Left lung (tissue), 14 donors: ENCODE measurements at regions of chr12 and their contacts with region 1.

Region 1: DNA sequence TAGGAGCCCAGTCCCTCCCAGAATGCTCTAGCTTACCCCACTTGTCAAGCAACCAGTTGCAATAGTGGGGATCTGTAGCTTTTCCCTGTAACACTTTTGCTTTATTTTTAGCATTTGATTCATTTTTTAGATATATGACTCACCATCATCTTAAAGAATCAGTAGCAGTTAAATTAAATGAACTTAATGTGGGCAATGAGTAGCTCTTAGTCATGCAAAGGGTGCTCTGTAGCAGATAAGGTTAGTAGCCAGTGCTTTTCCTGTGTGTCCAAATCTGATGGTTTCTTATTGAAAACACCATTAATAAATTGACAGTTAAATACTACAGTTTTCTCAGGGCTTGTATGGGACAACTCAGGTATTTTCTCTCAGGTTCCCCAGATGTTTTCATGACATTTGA is 311.8 kb downstream of the RERGL start:
- DNase-seq: no peak
- ATAC-seq: no peak
- H3K4me3 ChIP-seq: no peak overlapping the region
- H3K27ac ChIP-seq: no peak overlapping the region
- H3K4me1 ChIP-seq: no peaks in the 10 kb centered on the region
- H3K27me3 ChIP-seq: no peaks in the 10 kb centered on the region
- CTCF ChIP-seq: no peak

Region 2: DNA sequence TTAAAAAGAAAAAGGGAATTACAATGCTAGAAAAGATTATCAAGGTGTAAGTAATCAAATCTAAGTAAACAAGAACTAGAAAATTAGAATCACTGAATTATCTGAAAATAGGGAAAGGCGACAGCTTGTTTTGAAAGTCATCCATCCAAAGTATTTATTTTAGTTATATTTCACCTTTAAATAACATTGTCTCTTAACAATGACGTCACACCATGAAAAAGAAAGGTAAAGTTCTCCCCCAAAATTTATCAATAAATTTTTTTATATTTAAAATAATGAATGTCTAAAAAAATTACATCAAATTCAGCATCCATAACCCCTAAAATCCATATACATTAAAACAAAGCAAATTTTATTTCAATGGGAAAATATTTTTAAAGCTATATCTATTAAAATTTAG is 88.6 kb after region 1 on chr12:
- intact Hi-C with region 1: loop called (anchors 5 to 10 kb)
- DNase-seq: no peak
- ATAC-seq: no peak
- H3K4me3 ChIP-seq: no peak overlapping the region
- H3K27ac ChIP-seq: no peak overlapping the region
- H3K4me1 ChIP-seq: no peaks in the 10 kb centered on the region
- H3K27me3 ChIP-seq: no peaks in the 10 kb centered on the region
- CTCF ChIP-seq: no peak

Region 3: DNA sequence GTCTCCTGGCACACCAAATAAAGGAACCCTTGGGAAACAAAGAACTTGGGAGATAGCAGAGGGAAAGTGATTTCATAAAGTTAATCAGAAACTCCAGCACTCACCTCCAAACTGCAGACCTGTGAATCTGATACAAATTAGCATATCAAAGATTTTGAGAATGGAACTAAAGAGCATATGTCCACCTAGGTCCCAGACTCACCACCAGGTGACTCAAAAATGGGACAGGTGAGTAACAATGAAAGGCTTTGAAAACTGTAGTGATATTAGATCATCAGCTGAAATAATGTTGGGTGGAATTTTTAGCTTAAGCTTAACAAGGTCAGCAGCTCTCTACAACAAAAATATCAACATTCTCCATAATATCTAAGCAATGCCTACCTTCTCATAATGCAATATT is 97.0 kb after region 1 on chr12:
- intact Hi-C with region 1: loop called in 1 of 2 experiments (anchors 5 kb)
- DNase-seq: no peak
- ATAC-seq: no peak
- H3K4me3 ChIP-seq: no peak overlapping the region
- H3K27ac ChIP-seq: no peak overlapping the region
- H3K4me1 ChIP-seq: no peaks in the 10 kb centered on the region
- H3K27me3 ChIP-seq: no peaks in the 10 kb centered on the region
- CTCF ChIP-seq: no peak